K562 (cell line): ENCODE measurements at regions of chr16 and their contacts with region 1.

Region 1: DNA sequence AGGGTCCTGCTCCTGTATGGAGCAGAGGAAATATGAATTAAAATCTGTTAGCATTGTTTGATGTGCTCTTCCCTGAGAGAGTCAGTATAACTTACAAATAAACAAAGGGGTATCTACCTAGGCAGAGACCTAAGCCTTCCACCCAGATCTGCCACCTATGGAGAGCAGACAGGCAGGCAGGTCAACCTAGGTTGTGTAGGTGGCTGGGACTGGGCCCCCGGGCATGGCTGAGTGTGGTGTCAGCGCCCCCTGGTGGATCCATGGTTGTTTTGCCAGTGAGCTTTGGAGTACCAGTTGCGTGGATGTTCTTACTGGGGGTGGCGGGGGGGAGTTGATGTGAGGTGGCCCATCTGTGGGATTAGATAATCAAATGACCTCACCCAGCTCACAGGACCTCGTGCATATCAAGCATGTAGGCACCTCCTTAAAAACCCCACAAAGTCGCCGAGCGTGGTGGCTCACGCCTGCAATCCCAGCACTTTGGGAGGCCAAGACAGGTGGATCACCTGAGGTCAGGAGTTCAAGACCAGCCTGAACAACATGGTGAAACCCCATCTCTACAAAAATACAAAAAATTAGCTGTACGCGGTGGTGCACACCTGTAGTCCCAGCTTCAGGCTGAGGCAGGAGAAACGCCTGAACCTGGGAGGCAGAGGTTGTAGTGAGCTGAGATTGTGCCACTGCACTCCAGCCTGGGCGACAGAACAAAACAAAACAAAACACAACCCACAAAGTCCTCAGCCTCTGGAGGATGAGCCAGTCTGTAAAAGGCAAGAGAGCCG is 17.6 kb downstream of the DUS2 start:
- DNase-seq: peak; percentile 85 to 91 (median 88)
- ATAC-seq: peak; percentile 100
- H3K4me3 ChIP-seq: no peak overlapping the region
- H3K27ac ChIP-seq: no peak overlapping the region
- H3K4me1 ChIP-seq: peaks cover 0 to 2% of the 10 kb centered on the region in 2 experiments; a peak in 2 of 5 replicates
- H3K27me3 ChIP-seq: no peaks in the 10 kb centered on the region
- CTCF ChIP-seq: peak; percentile 88 to 97 (median 94)
- EP300 ChIP-seq: no peak
- POLR2A ChIP-seq: no peak
- RAD21 ChIP-seq: peak; percentile 92 to 96

Region 2: DNA sequence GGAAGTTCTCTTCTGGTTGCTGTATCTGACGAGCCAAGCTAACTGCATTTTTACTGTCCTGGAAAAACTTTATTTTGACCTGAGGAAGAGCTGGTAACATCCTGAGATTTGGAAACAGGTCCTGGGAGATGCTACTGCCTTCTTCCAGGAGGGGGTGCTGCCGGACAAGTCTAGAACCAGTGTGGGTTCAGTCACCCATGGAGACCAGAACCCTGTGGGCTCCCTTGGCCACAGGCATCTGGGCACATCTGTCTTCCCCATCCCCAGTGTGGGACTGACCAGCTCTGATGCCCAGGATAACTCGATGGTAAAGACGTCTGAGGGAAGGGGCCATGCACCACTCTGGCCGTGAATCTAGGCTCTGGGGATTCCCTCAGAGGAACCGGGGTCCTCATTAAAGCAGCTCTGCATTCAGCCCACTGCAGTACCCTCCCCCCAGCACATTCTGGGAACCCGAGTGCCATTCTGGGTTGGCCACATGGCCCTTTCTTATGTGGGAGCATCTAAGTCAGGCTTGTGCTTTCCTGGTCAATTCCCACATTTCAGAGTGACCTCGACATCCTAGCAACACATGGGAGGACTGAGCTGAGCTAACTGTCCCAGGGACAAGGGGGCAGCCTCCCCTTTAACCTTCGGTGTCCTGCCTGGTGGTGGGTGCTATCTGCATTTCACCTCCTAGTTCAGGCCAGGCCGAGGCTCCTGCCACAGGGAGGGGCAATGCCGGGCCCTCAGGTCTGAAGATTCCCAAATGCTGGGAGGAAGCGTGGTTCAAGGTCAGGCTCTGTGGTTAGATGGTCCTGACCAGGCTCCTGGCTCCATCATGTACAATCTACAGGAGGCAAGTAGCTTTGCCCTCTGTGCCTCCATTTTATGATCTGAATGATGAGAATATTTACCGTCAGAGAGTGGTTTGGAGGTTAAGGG is 367.7 kb before region 1 on chr16:
- CTCF ChIA-PET with region 1: interaction called, 9 read pairs
- POLR2A ChIA-PET with region 1: no interaction called
- in situ Hi-C with region 1: loop called (anchors 10 kb)
- intact Hi-C with region 1: loop called (anchors 5 kb)
- DNase-seq: peak; percentile 77 to 83 (median 80)
- ATAC-seq: peak; percentile 82
- H3K4me3 ChIP-seq: no peak overlapping the region
- H3K27ac ChIP-seq: no peak overlapping the region
- H3K4me1 ChIP-seq: peaks cover 0 to 10% of the 10 kb centered on the region in 2 experiments; a peak in 3 of 5 replicates
- H3K27me3 ChIP-seq: no peaks in the 10 kb centered on the region
- CTCF ChIP-seq: peak; percentile 83 to 94 (median 93)
- EP300 ChIP-seq: no peak
- POLR2A ChIP-seq: no peak
- RAD21 ChIP-seq: peak; percentile 87 to 90

Region 3: GRCh38 chr16:67816240-67817031 is 224.3 kb before region 1 on chr16:
- CTCF ChIA-PET with region 1: interaction called, 11 read pairs
- POLR2A ChIA-PET with region 1: no interaction called
- in situ Hi-C with region 1: loop called (anchors 10 kb)
- intact Hi-C with region 1: loop called (anchors 5 kb)
- DNase-seq: peak; percentile 86 to 94 (median 93)
- ATAC-seq: peak; percentile 97
- H3K4me3 ChIP-seq: no peak overlapping the region
- H3K27ac ChIP-seq: no peak overlapping the region
- H3K4me1 ChIP-seq: peaks cover 5 to 9% of the 10 kb centered on the region in 2 experiments; a peak in 3 of 5 replicates
- H3K27me3 ChIP-seq: no peaks in the 10 kb centered on the region
- CTCF ChIP-seq: peak; percentile 99 to 100 (median 100)
- EP300 ChIP-seq: peak; percentile 23; the same call in 1 of the 2 replicates
- POLR2A ChIP-seq: no peak
- RAD21 ChIP-seq: peak; percentile 94 to 96

Region 4: DNA sequence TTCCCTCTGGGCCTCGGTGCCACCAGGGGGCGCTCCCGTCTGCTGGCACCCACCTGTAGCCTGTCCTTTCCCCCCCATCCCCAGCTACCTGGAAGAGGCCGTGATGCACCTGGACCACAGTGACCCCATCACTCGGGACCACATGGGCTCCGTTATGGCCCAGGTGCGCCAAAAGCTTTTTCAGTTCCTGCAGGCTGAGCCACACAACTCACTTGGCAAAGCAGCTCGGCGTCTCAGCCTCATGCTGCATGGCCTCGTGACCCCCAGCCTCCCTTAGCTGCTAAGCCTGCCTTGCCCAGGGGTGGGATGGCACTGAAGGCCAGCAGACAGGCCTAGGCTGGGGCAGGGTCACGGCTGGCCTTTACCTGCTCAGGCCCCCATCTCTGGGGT is 156.8 kb before region 1 on chr16:
- CTCF ChIA-PET with region 1: interaction called, 3 read pairs
- POLR2A ChIA-PET with region 1: no interaction called
- in situ Hi-C with region 1: no loop called
- intact Hi-C with region 1: loop called (anchors 10 kb)
- DNase-seq: peak; percentile 62 to 77 (median 74)
- ATAC-seq: peak; percentile 69
- H3K4me3 ChIP-seq: no peak overlapping the region
- H3K27ac ChIP-seq: no peak overlapping the region
- H3K4me1 ChIP-seq: peaks cover 6 to 40% of the 10 kb centered on the region in 2 experiments; a peak in 4 of 5 replicates
- H3K27me3 ChIP-seq: no peaks in the 10 kb centered on the region
- CTCF ChIP-seq: peak; percentile 81 to 83 (median 81)
- EP300 ChIP-seq: no peak
- POLR2A ChIP-seq: no peak
- RAD21 ChIP-seq: peak; percentile 76 to 79

Region 5: GRCh38 chr16:67935402-67936123 is 105.1 kb before region 1 on chr16:
- CTCF ChIA-PET with region 1: interaction called, 4 read pairs
- POLR2A ChIA-PET with region 1: no interaction called
- in situ Hi-C with region 1: no loop called
- intact Hi-C with region 1: loop called (anchors 5 kb)
- DNase-seq: peak; percentile 98 to 99 (median 98)
- ATAC-seq: peak; percentile 94
- H3K4me3 ChIP-seq: peak overlapping the region; percentile 85
- H3K27ac ChIP-seq: peak overlapping the region; percentile 89
- H3K4me1 ChIP-seq: peaks cover 20 to 68% of the 10 kb centered on the region in 2 experiments
- H3K27me3 ChIP-seq: no peaks in the 10 kb centered on the region
- CTCF ChIP-seq: no peak; a peak in 1 of 6 replicates
- EP300 ChIP-seq: no peak
- POLR2A ChIP-seq: peak; percentile 92
- RAD21 ChIP-seq: no peak

Region 6: GRCh38 chr16:67993189-67994039 is 47.3 kb before region 1 on chr16:
- CTCF ChIA-PET with region 1: interaction called, 16 read pairs
- POLR2A ChIA-PET with region 1: no interaction called
- in situ Hi-C with region 1: no loop called
- intact Hi-C with region 1: loop called (anchors 1 kb)
- DNase-seq: peak; percentile 92 to 96 (median 94)
- ATAC-seq: peak; percentile 95
- H3K4me3 ChIP-seq: 0 out of 2 replicates have a peak overlapping the region, but pooled peaks have one; percentile 3
- H3K27ac ChIP-seq: peak overlapping the region; percentile 89
- H3K4me1 ChIP-seq: peaks cover 15 to 36% of the 10 kb centered on the region in 2 experiments
- H3K27me3 ChIP-seq: no peaks in the 10 kb centered on the region
- CTCF ChIP-seq: peak; percentile 93 to 98 (median 97)
- EP300 ChIP-seq: peak; percentile 29; the same call in 1 of the 2 replicates
- POLR2A ChIP-seq: peak; percentile 82
- RAD21 ChIP-seq: peak; percentile 88 to 89

Region 7: DNA sequence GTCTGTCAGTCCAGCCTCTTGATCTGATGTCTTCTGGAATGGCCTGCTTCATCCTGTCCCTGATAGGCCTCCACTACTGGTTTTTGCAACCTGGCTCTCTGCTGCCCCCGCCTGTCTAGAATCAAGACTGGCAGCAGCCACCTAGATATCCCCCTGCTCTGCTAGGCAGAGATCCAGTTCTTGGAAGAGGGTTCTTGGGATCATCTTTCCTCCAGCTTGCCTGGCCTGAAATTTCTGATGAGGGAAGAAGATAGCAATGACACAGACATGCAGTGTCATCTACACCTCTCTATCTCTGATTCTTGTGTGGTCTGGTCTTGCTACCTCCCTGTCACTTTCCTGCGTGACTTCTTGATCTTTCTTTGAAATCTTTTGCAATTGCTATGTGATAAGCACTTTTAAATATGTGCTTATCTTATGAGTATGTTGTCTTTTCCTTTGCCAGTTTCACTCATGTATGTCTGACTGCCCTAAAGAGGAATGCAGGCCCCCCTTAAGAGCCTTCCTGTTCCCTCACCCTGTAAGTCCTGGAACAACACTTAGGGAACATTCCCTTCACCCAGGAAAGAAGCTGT is 24.2 kb after region 1 on chr16:
- CTCF ChIA-PET with region 1: no interaction called
- POLR2A ChIA-PET with region 1: interaction called, 4 read pairs
- in situ Hi-C with region 1: no loop called
- intact Hi-C with region 1: loop called (anchors 1 kb)
- DNase-seq: peak; percentile 85 to 88 (median 86)
- ATAC-seq: peak; percentile 99
- H3K4me3 ChIP-seq: no peak overlapping the region
- H3K27ac ChIP-seq: peak overlapping the region; percentile 27; the same call in 1 of the 3 replicates
- H3K4me1 ChIP-seq: peaks cover 5 to 10% of the 10 kb centered on the region in 2 experiments
- H3K27me3 ChIP-seq: no peaks in the 10 kb centered on the region
- CTCF ChIP-seq: peak; percentile 86 to 95 (median 91)
- EP300 ChIP-seq: peak; percentile 54
- POLR2A ChIP-seq: no peak
- RAD21 ChIP-seq: peak; percentile 72 to 78

Region 8: DNA sequence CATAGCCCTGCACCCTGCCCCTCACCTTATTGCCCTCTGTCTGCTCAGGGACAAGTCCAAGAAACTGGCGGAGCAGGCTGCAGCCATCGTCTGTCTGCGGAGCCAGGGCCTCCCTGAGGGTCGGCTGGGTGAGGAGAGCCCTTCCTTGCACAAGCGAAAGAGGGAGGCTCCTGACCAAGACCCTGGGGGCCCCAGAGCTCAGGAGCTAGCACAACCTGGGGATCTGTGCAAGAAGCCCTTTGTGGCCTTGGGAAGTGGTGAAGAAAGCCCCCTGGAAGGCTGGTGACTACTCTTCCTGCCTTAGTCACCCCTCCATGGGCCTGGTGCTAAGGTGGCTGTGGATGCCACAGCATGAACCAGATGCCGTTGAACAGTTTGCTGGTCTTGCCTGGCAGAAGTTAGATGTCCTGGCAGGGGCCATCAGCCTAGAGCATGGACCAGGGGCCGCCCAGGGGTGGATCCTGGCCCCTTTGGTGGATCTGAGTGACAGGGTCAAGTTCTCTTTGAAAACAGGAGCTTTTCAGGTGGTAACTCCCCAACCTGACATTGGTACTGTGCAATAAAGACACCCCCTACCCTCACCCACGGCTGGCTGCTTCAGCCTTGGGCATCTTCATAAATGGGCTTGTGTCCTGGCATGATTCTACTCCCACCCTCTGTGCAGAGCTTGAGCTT is 38.1 kb after region 1 on chr16:
- CTCF ChIA-PET with region 1: no interaction called
- POLR2A ChIA-PET with region 1: no interaction called
- in situ Hi-C with region 1: no loop called
- intact Hi-C with region 1: no loop called
- DNase-seq: no peak
- ATAC-seq: no peak
- H3K4me3 ChIP-seq: no peak overlapping the region
- H3K27ac ChIP-seq: peak overlapping the region; percentile 98
- H3K4me1 ChIP-seq: peaks cover 48 to 58% of the 10 kb centered on the region in 2 experiments
- H3K27me3 ChIP-seq: no peaks in the 10 kb centered on the region
- CTCF ChIP-seq: no peak
- EP300 ChIP-seq: no peak
- POLR2A ChIP-seq: no peak
- RAD21 ChIP-seq: no peak